ENCODE measurements at regions of chr18 and their contacts with region 1.

Region 1: DNA sequence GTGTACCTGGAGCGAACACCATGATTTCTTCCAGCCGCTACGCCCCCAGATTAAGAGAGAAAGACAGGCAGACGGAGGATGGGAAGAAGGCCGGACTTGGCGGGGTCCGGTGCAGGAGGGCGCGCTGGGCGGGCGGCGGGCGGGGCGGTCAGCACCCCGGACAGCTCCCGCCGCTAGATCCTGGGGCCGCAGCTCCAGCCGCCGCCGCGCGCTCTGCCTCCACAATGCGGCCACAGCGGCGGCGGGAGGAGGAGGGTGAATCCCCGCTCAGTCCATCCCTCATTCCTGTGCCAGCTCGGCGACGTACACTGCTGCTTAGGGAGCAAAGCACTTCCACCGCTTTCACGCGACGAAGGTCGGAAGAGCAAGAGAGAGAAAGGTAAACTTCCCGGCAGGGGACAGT is at the start of gene AKAIN1:
- DNase-seq: peak; percentile 0
- H3K4me3 ChIP-seq: no peak within 1 kb of the TSS
- CTCF ChIP-seq: no peak

Region 2: GRCh38 chr18:5137261-5137660 is 59.8 kb before region 1 on chr18:
- in situ Hi-C with region 1: loop called (anchors 5 kb)
- DNase-seq: no peak
- H3K4me3 ChIP-seq: no peak overlapping the region
- CTCF ChIP-seq: no peak

Region 3: DNA sequence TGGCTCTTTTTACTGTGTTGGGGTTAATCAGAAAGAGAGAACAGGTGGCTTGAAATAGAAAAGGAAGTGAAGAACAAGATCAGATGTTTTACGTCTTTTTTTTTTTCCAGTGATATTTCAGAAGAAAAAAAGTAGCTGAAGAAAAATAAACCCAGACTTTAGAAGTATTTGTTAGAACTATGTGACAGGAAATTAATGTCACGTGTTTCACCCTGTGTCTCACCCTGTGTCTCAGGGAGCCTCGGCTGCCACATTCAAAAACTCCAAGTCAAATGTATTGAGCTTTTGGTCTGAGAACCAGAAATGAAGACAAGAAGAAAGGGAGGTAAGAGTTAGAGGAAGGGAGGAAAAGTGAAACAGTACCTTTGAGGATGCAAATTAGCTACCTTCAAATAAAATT is 38.0 kb before region 1 on chr18:
- in situ Hi-C with region 1: no loop called
- DNase-seq: no peak
- H3K4me3 ChIP-seq: no peak overlapping the region
- CTCF ChIP-seq: no peak